Activated T-helper 1 cell treated with anti-CD3 and anti-CD28 coated beads, Interleukin-12 subunit alpha, Interleukin-12 subunit beta, Interleukin-2, Interleukin-4 antibody, amounts not matched to agents 30 ng/mL and 10 ng/mL and 1 ng/mL, durations not matched to agents 14 hours and 24 hours and 36 hours (primary cell): ENCODE measurements at regions of chr13 and their contacts with region 1.

Region 1: GRCh38 chr13:27424246-27425157 is at the start of gene GTF3A:
- DNase-seq: peak; percentile 88
- H3K4me3 Mint-ChIP-seq: peak within 1 kb of the TSS; percentile 89
- H3K27ac Mint-ChIP-seq: peak within 1 kb of the TSS; percentile 98
- H3K4me1 Mint-ChIP-seq: peaks cover 37% of the 10 kb centered on the region
- H3K27me3 Mint-ChIP-seq: no peaks in the 10 kb centered on the region
- total RNA-seq, gene GTF3A: 255 and 264 TPM in 2 replicates

Region 2: DNA sequence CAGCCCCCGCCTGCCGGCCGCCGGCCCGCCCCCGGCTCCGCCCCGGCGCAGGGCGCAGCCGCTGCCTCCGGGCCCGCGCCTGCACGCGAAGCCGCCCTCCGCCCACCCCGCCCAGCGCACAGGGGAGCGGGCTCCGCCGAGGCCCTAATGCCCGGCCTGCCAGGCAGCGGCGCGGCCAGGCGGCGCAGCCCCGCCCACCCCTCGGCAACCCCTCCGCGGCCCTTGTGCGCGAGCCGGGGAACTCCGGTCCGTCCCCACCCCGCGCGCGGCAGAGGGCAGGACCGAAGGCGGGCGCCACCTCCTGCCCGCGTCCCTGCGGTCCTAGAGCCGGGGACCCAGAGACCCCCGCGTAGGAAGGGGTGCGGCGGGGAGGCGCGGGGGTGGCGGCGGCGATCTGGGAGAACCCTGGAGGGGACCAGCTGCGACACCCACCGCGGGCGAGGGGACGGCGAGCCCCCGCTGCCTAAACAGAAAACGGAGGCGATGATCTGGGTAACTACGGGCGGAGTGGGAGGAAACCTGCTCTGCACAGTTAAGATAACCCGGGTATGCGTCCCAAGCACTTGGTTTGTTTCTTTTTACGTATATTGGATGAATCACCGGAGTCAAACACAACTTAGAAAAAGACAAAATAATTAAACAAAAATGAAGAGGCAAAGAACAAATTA is 252.5 kb before region 1 on chr13:
- intact Hi-C with region 1: loop called (anchors 1 kb)
- DNase-seq: peak; percentile 92
- H3K4me3 Mint-ChIP-seq: peak overlapping the region; percentile 81
- H3K27ac Mint-ChIP-seq: peak overlapping the region; percentile 87
- H3K4me1 Mint-ChIP-seq: peaks cover 53% of the 10 kb centered on the region
- H3K27me3 Mint-ChIP-seq: no peaks in the 10 kb centered on the region

Region 3: GRCh38 chr13:27353166-27353583 is 71.3 kb before region 1 on chr13:
- intact Hi-C with region 1: loop called (anchors 2 kb)
- DNase-seq: peak; percentile 34
- H3K4me3 Mint-ChIP-seq: no peak overlapping the region
- H3K27ac Mint-ChIP-seq: peak overlapping the region; percentile 40
- H3K4me1 Mint-ChIP-seq: peaks cover 15% of the 10 kb centered on the region
- H3K27me3 Mint-ChIP-seq: peaks cover 7% of the 10 kb centered on the region

Region 4: GRCh38 chr13:27406178-27406939 is 18.1 kb before region 1 on chr13:
- intact Hi-C with region 1: loop called (anchors 1 kb)
- DNase-seq: peak; percentile 29
- H3K4me3 Mint-ChIP-seq: no peak overlapping the region
- H3K27ac Mint-ChIP-seq: no peak overlapping the region
- H3K4me1 Mint-ChIP-seq: peaks cover 13% of the 10 kb centered on the region
- H3K27me3 Mint-ChIP-seq: peaks cover 8% of the 10 kb centered on the region

Region 5: GRCh38 chr13:27620377-27621115 is 196.0 kb after region 1 on chr13 and contains the start of gene LNX2:
- intact Hi-C with region 1: loop called (anchors 1 kb)
- DNase-seq: peak; percentile 97
- H3K4me3 Mint-ChIP-seq: peak within 1 kb of the TSS; percentile 88
- H3K27ac Mint-ChIP-seq: peak within 1 kb of the TSS; percentile 88
- H3K4me1 Mint-ChIP-seq: peaks cover 57% of the 10 kb centered on the region
- H3K27me3 Mint-ChIP-seq: no peaks in the 10 kb centered on the region
- total RNA-seq, gene LNX2: 4.1 and 4.5 TPM in 2 replicates

Region 6: GRCh38 chr13:27665333-27665732 is 240.8 kb after region 1 on chr13:
- intact Hi-C with region 1: no loop called
- DNase-seq: no peak
- H3K4me3 Mint-ChIP-seq: no peak overlapping the region
- H3K27ac Mint-ChIP-seq: no peak overlapping the region
- H3K4me1 Mint-ChIP-seq: no peaks in the 10 kb centered on the region
- H3K27me3 Mint-ChIP-seq: no peaks in the 10 kb centered on the region

Region 7: GRCh38 chr13:27857282-27857681 is 432.8 kb after region 1 on chr13:
- intact Hi-C with region 1: no loop called
- DNase-seq: no peak
- H3K4me3 Mint-ChIP-seq: no peak overlapping the region
- H3K27ac Mint-ChIP-seq: no peak overlapping the region
- H3K4me1 Mint-ChIP-seq: no peaks in the 10 kb centered on the region
- H3K27me3 Mint-ChIP-seq: peaks cover 5% of the 10 kb centered on the region

Region 8: DNA sequence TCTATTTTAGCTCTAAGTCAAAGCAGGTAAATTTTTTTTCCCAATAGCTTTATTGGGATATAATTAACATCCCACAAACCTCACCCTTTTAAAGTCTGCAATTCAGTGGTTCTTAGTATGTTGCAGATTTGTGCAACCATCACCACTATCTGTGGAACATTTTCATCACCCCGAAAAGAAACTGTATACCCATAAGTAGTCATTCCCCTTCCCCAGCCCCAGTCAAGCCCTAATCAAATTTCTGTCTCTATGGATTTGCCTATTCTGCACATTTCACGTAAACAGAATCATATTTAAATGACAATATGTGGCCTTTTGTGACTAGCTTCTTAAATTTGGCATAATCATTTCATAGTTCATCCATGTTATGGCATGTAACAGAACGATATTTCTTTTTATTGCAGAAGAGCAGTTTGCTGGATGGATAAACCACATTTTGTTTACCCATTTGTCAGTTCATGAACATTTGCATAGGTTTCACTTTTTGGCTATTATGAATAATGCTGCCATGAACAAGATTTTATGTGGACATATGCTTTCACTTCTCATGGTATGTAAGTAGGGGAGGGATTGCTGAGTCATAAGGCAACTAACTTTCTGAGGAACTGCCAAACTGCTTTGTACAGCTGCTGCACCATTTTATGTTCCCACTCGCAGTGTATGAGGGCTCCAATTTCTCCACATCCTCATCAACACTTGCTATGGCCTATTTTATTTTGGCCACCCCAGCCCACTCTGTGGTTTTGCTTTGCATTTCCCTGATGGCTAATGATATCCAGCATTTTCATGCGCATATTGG is 1283.3 kb after region 1 on chr13:
- intact Hi-C with region 1: no loop called
- DNase-seq: no peak
- H3K4me3 Mint-ChIP-seq: no peak overlapping the region
- H3K27ac Mint-ChIP-seq: peak overlapping the region; percentile 6
- H3K4me1 Mint-ChIP-seq: peaks cover 12% of the 10 kb centered on the region
- H3K27me3 Mint-ChIP-seq: no peaks in the 10 kb centered on the region

Region 9: GRCh38 chr13:28718543-28719226 is 1294.2 kb after region 1 on chr13 and contains the start of gene SLC46A3:
- intact Hi-C with region 1: loop called (anchors 2 kb)
- DNase-seq: peak; percentile 95
- H3K4me3 Mint-ChIP-seq: peak within 1 kb of the TSS; percentile 85
- H3K27ac Mint-ChIP-seq: peak within 1 kb of the TSS; percentile 82
- H3K4me1 Mint-ChIP-seq: peaks cover 32% of the 10 kb centered on the region
- H3K27me3 Mint-ChIP-seq: peaks cover 4% of the 10 kb centered on the region
- total RNA-seq, gene SLC46A3: 2.7 and 3.8 TPM in 2 replicates